ENCODE measurements at regions of chr3 and their contacts with region 1.

Region 1: DNA sequence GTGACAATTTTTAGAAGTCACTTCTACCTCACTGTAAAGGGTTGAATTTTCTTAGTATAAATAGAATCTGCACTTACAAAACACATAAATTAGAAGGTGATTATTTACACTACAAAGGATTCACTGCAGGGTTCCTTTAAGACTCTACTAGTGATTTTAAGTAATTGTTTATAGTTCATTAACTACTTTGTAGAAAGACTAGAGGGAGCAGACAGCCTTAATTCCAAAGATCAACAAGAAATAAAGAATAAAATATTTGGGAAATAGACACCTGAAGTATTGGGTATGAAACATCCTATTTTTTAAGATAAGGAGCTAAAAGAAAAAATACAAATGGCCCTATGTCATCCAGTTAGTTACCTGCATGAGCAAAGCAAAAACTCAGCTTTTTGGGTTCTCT is 360.5 kb upstream of the ALCAM start:
- DNase-seq: no peak
- ATAC-seq: no peak
- H3K4me3 ChIP-seq: no peak overlapping the region
- H3K27ac ChIP-seq: no peak overlapping the region
- H3K4me1 ChIP-seq: no peaks in the 10 kb centered on the region
- H3K27me3 ChIP-seq: no peaks in the 10 kb centered on the region
- CTCF ChIP-seq: no peak
- POLR2A ChIP-seq: no peak
- RAD21 ChIP-seq: no peak

Region 2: DNA sequence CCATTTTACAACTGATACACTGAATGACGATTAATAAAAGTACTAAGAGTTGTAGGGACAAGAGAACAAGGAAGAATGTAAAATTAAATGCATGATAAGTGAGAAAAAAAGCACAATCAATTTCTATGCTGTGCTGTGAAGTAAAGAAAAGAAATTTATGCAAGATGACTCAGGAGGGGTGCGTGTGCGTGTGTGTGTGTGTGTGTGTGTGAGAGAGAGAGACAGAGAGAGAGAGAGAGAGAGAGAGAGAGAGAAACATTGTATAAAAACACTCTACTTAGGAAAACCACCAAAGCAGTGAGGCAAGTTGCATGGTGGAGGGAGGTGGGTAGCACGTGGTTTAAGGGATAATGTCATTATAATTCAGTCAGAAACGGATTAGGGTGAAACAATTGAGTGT is 220.2 kb before region 1 on chr3:
- CTCF ChIA-PET with region 1: no interaction called
- POLR2A ChIA-PET with region 1: no interaction called
- dilution Hi-C with region 1: no loop called
- in situ Hi-C with region 1: no loop called
- intact Hi-C with region 1: no loop called
- DNase-seq: peak; percentile 43
- ATAC-seq: no peak
- H3K4me3 ChIP-seq: no peak overlapping the region
- H3K27ac ChIP-seq: no peak overlapping the region
- H3K4me1 ChIP-seq: no peaks in the 10 kb centered on the region
- H3K27me3 ChIP-seq: no peaks in the 10 kb centered on the region
- CTCF ChIP-seq: no peak
- POLR2A ChIP-seq: no peak
- RAD21 ChIP-seq: no peak

Region 3: GRCh38 chr3:104961851-104962250 is 44.3 kb before region 1 on chr3:
- CTCF ChIA-PET with region 1: no interaction called
- POLR2A ChIA-PET with region 1: interaction called, 10 read pairs
- dilution Hi-C with region 1: no loop called
- in situ Hi-C with region 1: no loop called
- intact Hi-C with region 1: no loop called
- DNase-seq: no peak
- ATAC-seq: no peak
- H3K4me3 ChIP-seq: no peak overlapping the region
- H3K27ac ChIP-seq: no peak overlapping the region
- H3K4me1 ChIP-seq: peaks cover 5% of the 10 kb centered on the region; the same call in 1 of the 2 replicates
- H3K27me3 ChIP-seq: no peaks in the 10 kb centered on the region
- CTCF ChIP-seq: no peak
- POLR2A ChIP-seq: no peak
- RAD21 ChIP-seq: no peak

Measured in IMR-90 (cell line).